Head of caudate nucleus (tissue), 42 donors: ENCODE measurements at regions of chr6 and their contacts with region 1.

Region 1: GRCh38 chr6:46491628-46492547 is 639 bp upstream of the RCAN2 start:
- DNase-seq: peak; percentile 63 to 91 (median 81)

Region 2: GRCh38 chr6:46184114-46184513 is 307.8 kb before region 1 on chr6:
- intact Hi-C with region 1: no loop called
- DNase-seq: no peak

Region 3: GRCh38 chr6:46221222-46221793 is 270.6 kb before region 1 on chr6:
- intact Hi-C with region 1: loop called (anchors 5 kb)
- DNase-seq: peak in 11 of 42 donors; percentile 21 to 75 (median 41)

Region 4: DNA sequence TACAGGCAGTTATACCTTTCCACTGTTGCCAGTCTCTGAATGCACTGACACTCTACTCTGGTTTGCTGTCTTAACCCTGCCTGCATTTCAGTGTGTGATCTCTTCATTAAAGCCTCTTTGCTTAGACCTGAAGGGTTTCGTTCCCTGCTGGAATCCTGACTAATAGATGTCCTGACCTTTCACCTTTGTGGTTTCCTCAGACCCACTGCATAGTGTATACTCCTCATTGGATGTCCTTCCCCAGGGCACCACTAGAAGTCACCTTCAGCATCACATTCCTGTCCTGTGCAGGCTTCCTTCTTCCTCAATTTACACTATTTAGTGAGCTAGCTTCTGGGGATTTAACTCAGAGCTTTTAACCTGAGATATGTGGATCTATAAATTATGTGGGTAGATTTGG is 121.3 kb before region 1 on chr6:
- intact Hi-C with region 1: no loop called
- DNase-seq: no peak

Region 5: DNA sequence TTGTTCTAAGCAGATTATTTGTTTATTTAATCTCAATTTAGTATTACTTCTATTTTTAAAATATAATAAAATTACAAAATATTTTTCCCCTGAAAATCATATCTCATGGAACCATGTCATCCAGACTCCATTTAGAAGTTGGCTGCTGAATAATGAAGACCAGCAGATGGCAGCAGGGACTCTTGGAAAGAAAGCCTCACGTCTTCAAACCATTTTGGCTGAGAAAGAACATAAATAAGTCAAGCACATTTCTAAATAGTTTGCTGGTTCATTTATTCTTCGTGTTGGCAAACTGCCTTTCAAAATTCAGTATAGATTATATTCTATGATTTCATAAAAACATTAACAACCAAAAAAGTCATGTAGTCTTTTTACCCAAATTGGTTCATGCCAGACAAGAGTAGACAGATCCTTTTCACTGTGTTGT is 72.3 kb before region 1 on chr6:
- intact Hi-C with region 1: loop called (anchors 2 kb)
- DNase-seq: peak in 40 of 42 donors; percentile 29 to 91 (median 76)

Region 6: GRCh38 chr6:46704562-46704961 is 212.7 kb after region 1 on chr6:
- intact Hi-C with region 1: no loop called
- DNase-seq: peak in 19 of 42 donors; percentile 7 to 66 (median 26)